ENCODE measurements at regions of chr5 and their contacts with region 1.

Region 1: GRCh38 chr5:139560752-139561654 is at the start of gene UBE2D2:
- DNase-seq: peak; percentile 97 to 98 (median 97)
- H3K4me3 ChIP-seq: peak within 1 kb of the TSS; percentile 64
- H3K4me3 Mint-ChIP-seq: peak within 1 kb of the TSS; percentile 90 to 97 (median 95)
- H3K27ac ChIP-seq: peak within 1 kb of the TSS; percentile 77
- H3K27ac Mint-ChIP-seq: peak within 1 kb of the TSS; percentile 89 to 99 (median 97)
- H3K4me1 ChIP-seq: peaks cover 40% of the 10 kb centered on the region
- H3K4me1 Mint-ChIP-seq: peaks cover 36 to 46% (median 40%) of the 10 kb centered on the region in 3 donors
- H3K27me3 ChIP-seq: no peaks in the 10 kb centered on the region
- H3K27me3 Mint-ChIP-seq: peaks cover 0 to 3% of the 10 kb centered on the region in 2 donors
- total RNA-seq, gene UBE2D2: 253 to 274 TPM

Region 2: GRCh38 chr5:139468421-139468931 is 92.5 kb before region 1 on chr5:
- CTCF ChIA-PET with region 1: no interaction called
- POLR2A ChIA-PET with region 1: no interaction called
- DNase-seq: no peak
- H3K4me3 ChIP-seq: no peak overlapping the region
- H3K4me3 Mint-ChIP-seq: peak overlapping the region in 4 of 7 donors; percentile 20 to 76 (median 66)
- H3K27ac ChIP-seq: no peak overlapping the region
- H3K27ac Mint-ChIP-seq: peak overlapping the region in 3 of 8 donors; percentile 46 to 75 (median 69)
- H3K4me1 ChIP-seq: peaks cover 49% of the 10 kb centered on the region
- H3K4me1 Mint-ChIP-seq: peaks cover 45 to 53% (median 52%) of the 10 kb centered on the region in 3 donors
- H3K27me3 ChIP-seq: no peaks in the 10 kb centered on the region
- H3K27me3 Mint-ChIP-seq: no peaks in the 10 kb centered on the region

Region 3: DNA sequence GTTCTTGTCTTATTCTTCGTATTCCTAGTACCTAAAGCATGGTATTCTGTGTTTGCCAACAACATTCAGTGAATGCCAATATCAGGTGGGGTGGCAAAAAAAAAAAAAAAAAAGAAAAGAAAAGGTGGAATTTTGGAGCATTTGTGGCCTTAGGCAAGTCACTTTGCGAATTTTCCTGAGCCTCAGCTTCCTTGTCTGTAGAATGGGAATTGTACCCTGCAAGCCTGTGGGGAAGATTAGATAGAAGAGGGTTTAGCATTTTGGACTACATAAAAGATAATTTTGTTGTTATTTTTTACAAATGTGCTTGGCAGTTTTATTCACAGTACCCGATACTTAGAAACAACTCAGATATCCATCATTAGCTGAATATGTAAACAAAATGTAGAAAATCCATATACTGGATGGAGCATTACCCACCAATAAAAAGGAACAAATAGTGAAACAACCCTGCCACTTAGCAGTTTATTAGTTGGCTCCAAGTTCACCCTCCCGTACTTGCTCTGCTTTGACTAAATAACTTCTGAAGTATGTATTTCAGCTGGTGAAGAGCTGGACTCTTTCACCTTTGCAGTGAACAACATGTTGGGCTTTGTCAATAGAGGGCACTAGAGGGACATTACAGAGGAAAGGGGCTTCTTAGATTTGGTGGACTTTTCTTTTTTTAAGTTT is 13.8 kb after region 1 on chr5:
- CTCF ChIA-PET with region 1: interaction called, 54 read pairs
- POLR2A ChIA-PET with region 1: interaction called, 14 read pairs
- DNase-seq: peak in 2 of 5 donors; percentile 35 to 59
- H3K4me3 ChIP-seq: no peak overlapping the region
- H3K4me3 Mint-ChIP-seq: peak overlapping the region in 5 of 7 donors; percentile 15 to 54 (median 38)
- H3K27ac ChIP-seq: no peak overlapping the region
- H3K27ac Mint-ChIP-seq: peak overlapping the region; percentile 27 to 86 (median 70)
- H3K4me1 ChIP-seq: peaks cover 77% of the 10 kb centered on the region
- H3K4me1 Mint-ChIP-seq: peaks cover 69 to 84% (median 72%) of the 10 kb centered on the region in 3 donors
- H3K27me3 ChIP-seq: no peaks in the 10 kb centered on the region
- H3K27me3 Mint-ChIP-seq: no peaks in the 10 kb centered on the region

Region 4: DNA sequence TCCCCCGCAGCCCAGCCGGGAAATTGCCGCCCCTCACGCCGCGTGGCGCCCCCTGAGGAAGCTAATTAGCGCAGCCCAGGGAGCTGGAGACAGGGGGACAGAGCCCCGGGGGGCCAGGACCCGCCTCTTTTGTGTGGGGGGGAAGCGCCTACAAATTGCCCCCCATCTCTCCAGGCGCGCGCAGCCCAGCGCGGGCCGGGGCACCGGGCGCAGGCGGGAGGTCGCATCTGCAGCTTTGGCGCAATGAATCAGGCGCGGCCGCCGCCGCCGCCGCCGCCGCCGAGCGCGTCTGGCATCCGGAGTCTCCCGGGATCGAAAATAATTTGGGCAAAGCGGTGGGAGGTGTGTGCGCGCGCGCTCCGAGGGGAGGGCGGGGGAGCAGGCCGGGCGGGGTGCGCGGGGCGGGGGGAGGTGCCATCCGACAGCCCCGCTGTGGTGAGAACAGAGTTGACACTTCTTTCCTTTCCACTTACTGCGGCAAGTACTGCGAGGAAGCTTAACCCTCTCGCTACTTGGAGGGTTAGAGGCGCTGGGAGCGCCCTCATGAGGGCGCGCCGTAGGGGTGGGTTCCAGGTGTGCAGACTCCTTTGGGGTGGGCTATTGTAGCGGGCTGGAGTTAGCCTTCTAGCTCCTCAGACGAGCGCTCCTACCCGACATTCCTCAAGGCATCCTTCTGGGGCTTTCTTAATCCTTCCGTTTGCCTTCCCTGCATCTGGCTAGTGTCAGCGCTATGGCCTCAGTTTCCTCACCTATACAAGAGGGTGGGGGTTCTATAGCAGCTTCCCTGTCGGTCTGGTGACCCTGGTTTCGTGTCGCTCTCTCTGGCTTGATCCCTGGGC is 150.3 kb after region 1 on chr5:
- CTCF ChIA-PET with region 1: no interaction called
- POLR2A ChIA-PET with region 1: no interaction called
- DNase-seq: peak; percentile 62 to 83 (median 67)
- H3K4me3 ChIP-seq: peak overlapping the region; percentile 78
- H3K4me3 Mint-ChIP-seq: peak overlapping the region; percentile 77 to 90 (median 79)
- H3K27ac ChIP-seq: peak overlapping the region; percentile 76
- H3K27ac Mint-ChIP-seq: peak overlapping the region; percentile 67 to 97 (median 94)
- H3K4me1 ChIP-seq: peaks cover 32% of the 10 kb centered on the region
- H3K4me1 Mint-ChIP-seq: peaks cover 26 to 50% (median 30%) of the 10 kb centered on the region in 3 donors
- H3K27me3 ChIP-seq: no peaks in the 10 kb centered on the region
- H3K27me3 Mint-ChIP-seq: no peaks in the 10 kb centered on the region

Region 5: DNA sequence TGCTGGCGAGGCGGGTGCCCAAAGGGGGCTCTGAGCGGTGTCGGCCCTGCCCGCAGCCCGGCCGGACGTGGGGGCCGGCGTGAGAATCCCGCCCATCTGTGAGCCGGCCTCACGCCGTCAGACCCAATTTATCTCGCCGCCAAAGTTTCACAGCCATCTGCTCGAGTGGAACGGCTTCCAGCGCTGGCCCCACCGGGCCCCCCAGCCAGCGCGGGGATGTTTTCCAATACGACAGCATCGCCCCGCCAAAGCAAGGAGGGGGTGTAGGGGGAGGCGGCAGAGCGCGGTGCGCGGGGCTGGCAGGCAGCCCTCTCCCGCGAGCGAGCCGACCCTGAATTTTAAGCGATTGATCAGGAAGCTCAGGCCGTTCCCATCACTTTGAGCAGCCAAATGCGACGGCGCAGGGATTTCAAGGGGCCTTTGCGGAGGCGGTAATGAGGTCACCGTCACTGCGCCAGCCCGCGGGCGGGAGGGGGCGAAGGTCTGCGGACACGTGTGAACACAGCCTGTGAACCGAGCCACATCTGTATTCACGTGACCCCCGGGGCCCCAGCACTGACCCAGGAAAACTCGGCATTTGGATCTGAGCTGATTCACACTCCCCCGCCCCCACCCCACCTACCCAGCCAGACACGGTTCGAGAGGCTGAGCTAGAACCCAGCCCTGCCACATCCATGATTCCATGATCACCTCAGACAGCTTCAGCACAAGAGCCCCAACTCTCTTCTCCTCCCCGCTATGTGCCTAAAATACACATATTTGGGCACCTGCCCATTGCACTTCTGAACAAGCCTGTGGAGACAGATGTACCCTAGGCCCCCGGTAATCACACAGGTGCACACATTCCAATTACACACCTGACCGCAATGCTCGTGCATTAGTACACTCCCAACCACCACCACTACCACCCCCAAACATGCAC is 186.8 kb after region 1 on chr5:
- CTCF ChIA-PET with region 1: no interaction called
- POLR2A ChIA-PET with region 1: no interaction called
- DNase-seq: peak; percentile 37 to 70 (median 45)
- H3K4me3 ChIP-seq: peak overlapping the region; percentile 70
- H3K4me3 Mint-ChIP-seq: peak overlapping the region; percentile 87 to 91 (median 90)
- H3K27ac ChIP-seq: peak overlapping the region; percentile 39
- H3K27ac Mint-ChIP-seq: peak overlapping the region; percentile 51 to 97 (median 88)
- H3K4me1 ChIP-seq: peaks cover 24% of the 10 kb centered on the region
- H3K4me1 Mint-ChIP-seq: peaks cover 16 to 34% (median 25%) of the 10 kb centered on the region in 3 donors
- H3K27me3 ChIP-seq: peaks cover 11% of the 10 kb centered on the region
- H3K27me3 Mint-ChIP-seq: no peaks in the 10 kb centered on the region

Measured in CD8-positive, alpha-beta memory T cell (primary cell).